ENCODE measurements at regions of chr6 and their contacts with region 1.

Region 1: DNA sequence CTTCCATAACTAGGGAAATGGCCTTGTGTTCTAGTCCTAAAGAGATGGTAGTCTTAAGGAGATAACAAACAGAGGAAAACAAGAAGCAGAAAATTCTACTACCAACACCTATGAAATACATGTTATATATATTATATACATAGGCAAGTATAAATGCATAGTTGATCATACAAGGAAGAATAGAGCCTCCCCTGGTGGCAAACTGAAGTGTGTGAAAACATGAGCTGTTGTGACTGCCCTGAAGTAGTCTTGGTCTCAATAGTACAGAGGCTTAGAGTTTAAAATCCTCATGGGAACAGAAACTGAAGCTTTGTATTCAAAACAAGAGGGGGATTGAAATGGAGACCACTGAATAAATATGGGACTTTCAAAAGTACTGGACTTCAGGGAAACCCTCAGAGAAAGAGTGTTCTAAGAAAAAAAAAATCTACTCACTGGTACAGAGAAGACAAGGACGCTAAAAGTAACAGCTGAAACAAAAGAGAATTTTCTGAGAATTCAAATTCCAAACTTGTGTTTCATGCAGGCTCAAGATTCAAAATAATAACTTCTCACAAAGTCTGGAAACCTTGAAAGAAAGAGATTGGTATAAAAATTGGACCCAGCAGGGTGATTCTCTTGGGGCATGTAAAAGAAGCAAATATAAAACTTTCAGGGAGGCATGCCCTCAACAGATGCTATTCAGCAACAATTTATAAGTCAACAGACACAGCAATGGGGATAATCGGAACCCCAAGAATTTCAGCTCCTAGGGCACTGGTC is 59.7 kb upstream of the SAMD3 start:
- DNase-seq: no peak
- H3K4me3 Mint-ChIP-seq: no peak overlapping the region
- H3K27ac Mint-ChIP-seq: no peak overlapping the region
- H3K4me1 Mint-ChIP-seq: peaks cover 12% of the 10 kb centered on the region
- H3K27me3 Mint-ChIP-seq: no peaks in the 10 kb centered on the region

Region 2: DNA sequence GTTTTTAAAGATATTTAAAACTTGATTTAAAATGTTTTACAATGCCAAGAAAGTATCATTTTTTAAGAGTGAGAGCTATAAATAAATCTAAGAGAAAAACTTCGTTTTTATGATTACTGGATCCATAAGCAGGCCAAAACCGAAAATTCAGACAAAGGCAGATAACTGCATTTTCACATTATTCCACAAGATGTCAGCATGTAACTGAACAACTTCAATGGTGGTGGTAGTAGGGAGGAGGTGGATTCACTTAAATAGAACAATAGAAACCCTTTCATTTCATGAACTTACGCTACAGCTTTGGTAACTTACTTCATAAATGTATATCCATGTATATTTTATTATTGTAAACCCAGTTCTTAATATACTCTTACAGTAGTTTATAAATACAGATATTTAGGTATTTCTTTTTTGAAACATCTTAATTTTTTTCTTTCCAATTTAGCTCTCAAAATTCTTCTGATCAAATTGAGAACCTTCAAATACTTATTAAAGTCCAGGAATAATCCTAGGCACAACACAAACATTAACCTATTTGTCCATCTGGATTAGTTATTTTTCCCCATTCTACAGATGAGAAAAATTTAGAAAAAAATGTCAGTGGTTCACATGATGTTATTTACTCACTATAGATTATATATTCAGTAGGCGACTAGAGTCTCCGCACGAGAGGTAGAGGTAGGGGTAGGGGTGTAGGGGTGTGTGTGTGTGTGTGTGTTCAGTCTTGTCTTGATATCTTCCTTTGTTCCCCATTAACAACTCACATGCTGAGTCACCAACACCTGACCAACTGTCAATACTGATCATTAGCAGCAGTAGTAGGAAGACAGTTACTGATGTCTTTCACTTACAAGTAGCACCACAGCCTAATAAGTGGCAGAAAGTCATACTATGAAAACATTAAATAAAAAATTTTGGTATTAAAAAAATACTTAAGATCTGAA is 683.9 kb before region 1 on chr6:
- intact Hi-C with region 1: loop called (anchors 10 kb)
- DNase-seq: peak; percentile 19
- H3K4me3 Mint-ChIP-seq: no peak overlapping the region
- H3K27ac Mint-ChIP-seq: no peak overlapping the region
- H3K4me1 Mint-ChIP-seq: no peaks in the 10 kb centered on the region
- H3K27me3 Mint-ChIP-seq: no peaks in the 10 kb centered on the region

Region 3: DNA sequence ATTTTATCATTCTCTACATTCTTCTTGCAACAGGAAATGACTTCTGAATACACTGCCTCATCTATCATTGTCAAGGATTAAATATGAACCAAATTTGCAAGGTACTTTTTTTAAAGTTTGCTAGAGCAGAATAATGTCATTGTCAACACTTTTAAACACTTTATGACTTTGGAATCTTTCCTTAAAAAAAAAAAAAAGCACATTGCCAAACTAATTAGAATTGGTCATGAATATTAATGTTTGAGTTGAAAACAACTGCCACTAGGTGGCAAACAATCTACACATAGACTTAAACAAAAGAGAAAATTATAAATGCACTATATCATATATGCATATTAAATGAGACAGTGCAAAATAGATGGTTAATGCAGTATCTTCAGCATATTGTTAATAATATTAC is 388.8 kb before region 1 on chr6:
- intact Hi-C with region 1: loop called (anchors 5 kb)
- DNase-seq: no peak
- H3K4me3 Mint-ChIP-seq: no peak overlapping the region
- H3K27ac Mint-ChIP-seq: no peak overlapping the region
- H3K4me1 Mint-ChIP-seq: peaks cover 6% of the 10 kb centered on the region
- H3K27me3 Mint-ChIP-seq: peaks cover 6% of the 10 kb centered on the region

Region 4: GRCh38 chr6:130037207-130037811 is 245.1 kb before region 1 on chr6:
- intact Hi-C with region 1: loop called (anchors 1 kb)
- DNase-seq: no peak
- H3K4me3 Mint-ChIP-seq: no peak overlapping the region
- H3K27ac Mint-ChIP-seq: no peak overlapping the region
- H3K4me1 Mint-ChIP-seq: peaks cover 43% of the 10 kb centered on the region
- H3K27me3 Mint-ChIP-seq: peaks cover 2% of the 10 kb centered on the region

Region 5: DNA sequence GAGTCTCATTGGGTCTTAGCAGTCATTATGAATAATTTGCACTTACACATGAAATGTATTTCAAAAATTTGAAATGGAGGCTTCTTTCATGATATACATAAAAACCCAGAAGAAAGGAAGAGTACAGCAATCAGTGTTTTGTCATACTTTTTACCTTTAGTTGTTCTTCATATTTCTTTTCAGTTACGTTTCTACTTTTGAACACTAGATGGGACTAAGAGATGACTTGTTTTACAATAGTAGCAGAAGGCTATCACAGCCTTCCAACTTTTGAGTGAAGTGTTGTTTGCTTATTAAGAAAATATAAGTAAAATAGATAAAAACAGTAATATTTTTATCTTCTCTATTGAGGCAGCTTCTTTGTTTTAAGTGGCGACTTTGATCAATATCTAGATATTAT is 205.9 kb before region 1 on chr6:
- intact Hi-C with region 1: loop called (anchors 1 kb)
- DNase-seq: no peak
- H3K4me3 Mint-ChIP-seq: no peak overlapping the region
- H3K27ac Mint-ChIP-seq: no peak overlapping the region
- H3K4me1 Mint-ChIP-seq: peaks cover 32% of the 10 kb centered on the region
- H3K27me3 Mint-ChIP-seq: no peaks in the 10 kb centered on the region